H1 (cell line): ENCODE measurements at regions of chr15 and their contacts with region 1.

Region 1: DNA sequence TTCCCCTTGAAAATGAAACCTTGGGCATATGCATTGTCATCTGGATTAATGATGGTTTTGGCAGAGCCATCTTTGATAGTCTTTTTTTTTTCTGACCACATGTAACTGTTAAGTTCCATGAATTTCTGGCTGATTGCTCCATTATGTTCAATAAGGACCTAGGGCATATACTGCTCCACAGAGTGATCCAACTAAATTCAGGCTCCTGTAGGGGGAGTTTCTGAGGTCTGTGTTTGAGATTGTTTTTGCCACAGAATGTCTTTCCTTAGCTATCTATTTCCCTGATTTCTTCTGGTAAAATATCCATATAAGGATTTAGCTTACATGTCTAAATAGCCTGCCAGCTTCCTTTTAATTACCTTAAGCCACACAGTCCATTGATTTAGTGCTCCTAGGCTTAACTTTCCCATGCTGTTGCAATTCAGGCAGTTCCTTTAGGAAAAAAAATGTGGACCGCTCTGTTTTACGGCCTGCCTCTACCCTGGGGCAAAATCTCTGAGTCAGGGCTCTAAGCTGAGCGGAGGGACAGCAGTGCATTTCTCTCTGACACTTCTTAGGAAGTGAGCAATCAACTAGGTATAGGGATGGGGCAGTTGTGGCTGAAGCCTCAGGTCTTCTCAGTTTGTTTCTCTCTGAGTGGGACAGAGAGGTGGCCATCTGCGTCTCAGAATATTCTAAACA is 796.2 kb downstream of the NR2F2 start:
- DNase-seq: no peak
- H3K4me3 ChIP-seq: no peak overlapping the region
- H3K27ac ChIP-seq: no peak overlapping the region
- H3K4me1 ChIP-seq: no peaks in the 10 kb centered on the region
- H3K27me3 ChIP-seq: no peaks in the 10 kb centered on the region
- CTCF ChIP-seq: peak in 1 of 3 experiments; percentile 26; a peak in 1 of 4 replicates
- EP300 ChIP-seq: no peak
- POLR2A ChIP-seq: no peak
- RAD21 ChIP-seq: peak in 1 of 2 experiments; percentile 20; a peak in 1 of 4 replicates

Region 2: DNA sequence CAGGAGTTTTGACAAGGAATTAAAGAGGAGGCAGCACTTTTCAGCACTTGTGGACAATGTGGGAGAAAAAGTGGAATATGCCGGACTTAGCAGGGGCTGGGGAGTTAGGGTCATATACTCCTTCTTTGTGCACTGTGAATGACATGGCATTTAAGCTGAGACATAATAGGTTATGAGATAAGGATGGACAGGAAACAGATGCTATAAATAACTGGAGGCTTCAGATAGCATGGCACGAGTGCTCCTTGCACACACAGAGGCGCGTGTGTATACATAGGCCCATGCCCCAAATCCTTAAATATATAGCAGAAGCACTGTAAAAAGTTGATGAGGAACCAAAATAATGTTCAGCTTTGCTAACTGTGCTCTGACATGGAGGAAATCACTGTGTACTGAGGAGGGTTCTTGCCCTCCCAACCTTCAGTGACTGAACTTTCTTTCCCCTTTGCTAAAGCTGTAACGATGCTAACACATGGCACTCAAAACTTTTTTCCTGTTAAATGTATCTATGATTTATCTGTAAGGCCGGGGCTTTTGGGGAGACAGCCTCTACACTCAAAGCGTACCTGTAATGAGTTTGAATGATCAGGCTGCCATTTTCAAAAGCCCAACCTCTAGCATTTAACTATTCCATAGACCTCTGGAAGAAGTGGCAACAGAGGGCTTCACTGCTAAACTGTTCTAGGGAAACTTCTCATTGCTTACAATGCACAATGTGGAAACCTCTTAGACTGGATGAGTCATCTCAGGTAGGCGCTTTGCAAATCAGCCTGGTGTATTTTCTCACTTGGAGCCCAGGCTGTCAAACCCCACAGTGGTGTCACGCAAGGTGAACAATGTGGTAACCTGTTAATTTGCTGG is 11.6 kb before region 1 on chr15:
- CTCF ChIA-PET with region 1: interaction called, 12 read pairs
- POLR2A ChIA-PET with region 1: no interaction called
- DNase-seq: no peak
- H3K4me3 ChIP-seq: no peak overlapping the region
- H3K27ac ChIP-seq: no peak overlapping the region
- H3K4me1 ChIP-seq: no peaks in the 10 kb centered on the region; a peak in 1 of 7 replicates
- H3K27me3 ChIP-seq: peaks cover 0 to 1% (median 0%) of the 10 kb centered on the region in 4 experiments; a peak in 1 of 7 replicates
- CTCF ChIP-seq: no peak
- EP300 ChIP-seq: no peak
- POLR2A ChIP-seq: no peak
- RAD21 ChIP-seq: no peak